ENCODE measurements at regions of chr20 and their contacts with region 1.

Region 1: DNA sequence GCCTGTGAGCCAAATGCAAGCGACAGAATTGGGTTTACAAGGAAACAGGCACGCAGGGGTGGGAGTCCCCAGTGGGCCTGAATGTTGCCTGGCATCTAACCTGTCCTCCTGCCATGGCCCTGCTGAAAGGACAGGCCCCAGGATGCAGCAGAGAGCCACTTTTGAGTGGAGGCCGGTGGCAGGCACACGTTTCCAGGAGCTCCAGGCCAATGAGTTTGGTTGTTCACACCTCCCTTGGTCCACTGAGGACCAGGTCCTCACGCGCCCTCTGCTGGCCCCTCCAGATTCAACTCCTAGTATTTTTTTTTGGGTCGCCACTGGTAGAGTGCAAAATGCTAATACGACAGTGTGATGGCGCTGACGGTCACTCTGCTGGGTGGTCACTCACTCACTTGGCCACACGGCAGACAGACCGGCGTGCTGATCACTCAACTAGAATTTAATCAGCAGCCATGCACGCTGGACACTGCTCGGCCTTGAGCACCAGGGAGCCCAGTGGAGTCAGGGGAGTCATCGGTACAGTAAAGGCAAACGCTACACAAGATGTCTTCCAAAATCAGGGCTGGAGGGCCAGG is 81.7 kb upstream of the NFATC2 start:
- DNase-seq: peak; percentile 53 to 76
- H3K4me3 ChIP-seq: no peak overlapping the region
- H3K27ac ChIP-seq: no peak overlapping the region
- H3K4me1 ChIP-seq: no peaks in the 10 kb centered on the region
- H3K27me3 ChIP-seq: no peaks in the 10 kb centered on the region
- CTCF ChIP-seq: peak; percentile 87

Region 2: GRCh38 chr20:51311606-51312495 is 312.4 kb before region 1 on chr20:
- CTCF ChIA-PET with region 1: no interaction called
- POLR2A ChIA-PET with region 1: no interaction called
- intact Hi-C with region 1: loop called (anchors 2 kb)
- DNase-seq: peak; percentile 43 to 89
- H3K4me3 ChIP-seq: peak overlapping the region; percentile 35; the same call in 1 of the 2 replicates
- H3K27ac ChIP-seq: peak overlapping the region; percentile 40
- H3K4me1 ChIP-seq: peaks cover 22% of the 10 kb centered on the region
- H3K27me3 ChIP-seq: no peaks in the 10 kb centered on the region
- CTCF ChIP-seq: no peak

Region 3: GRCh38 chr20:51354769-51355319 is 269.4 kb before region 1 on chr20:
- CTCF ChIA-PET with region 1: no interaction called
- POLR2A ChIA-PET with region 1: no interaction called
- intact Hi-C with region 1: no loop called
- DNase-seq: peak in 1 of 2 experiments; percentile 53
- H3K4me3 ChIP-seq: no peak overlapping the region
- H3K27ac ChIP-seq: no peak overlapping the region
- H3K4me1 ChIP-seq: peaks cover 33% of the 10 kb centered on the region
- H3K27me3 ChIP-seq: no peaks in the 10 kb centered on the region
- CTCF ChIP-seq: no peak

Region 4: GRCh38 chr20:52150440-52151258 is 526.4 kb after region 1 on chr20:
- CTCF ChIA-PET with region 1: no interaction called
- POLR2A ChIA-PET with region 1: no interaction called
- intact Hi-C with region 1: loop called (anchors 5 kb)
- DNase-seq: peak in 1 of 2 experiments; percentile 9
- H3K4me3 ChIP-seq: no peak overlapping the region
- H3K27ac ChIP-seq: no peak overlapping the region
- H3K4me1 ChIP-seq: no peaks in the 10 kb centered on the region
- H3K27me3 ChIP-seq: no peaks in the 10 kb centered on the region
- CTCF ChIP-seq: peak; percentile 90

Measured in PC-9 (cell line).